Calu3 (cell line): ENCODE measurements at regions of chr1 and their contacts with region 1.

Region 1: GRCh38 chr1:245380790-245381535 is 226.2 kb downstream of the KIF26B start:
- DNase-seq: no peak
- H3K4me3 Mint-ChIP-seq: no peak overlapping the region
- H3K27ac Mint-ChIP-seq: no peak overlapping the region
- H3K4me1 Mint-ChIP-seq: no peaks in the 10 kb centered on the region
- H3K27me3 Mint-ChIP-seq: peaks cover 7% of the 10 kb centered on the region
- CTCF ChIP-seq: no peak

Region 2: GRCh38 chr1:245079021-245079609 is 301.8 kb before region 1 on chr1:
- CTCF ChIA-PET with region 1: no interaction called
- intact Hi-C with region 1: loop called (anchors 5 kb)
- DNase-seq: peak; percentile 28
- H3K4me3 Mint-ChIP-seq: no peak overlapping the region
- H3K27ac Mint-ChIP-seq: no peak overlapping the region
- H3K4me1 Mint-ChIP-seq: no peaks in the 10 kb centered on the region
- H3K27me3 Mint-ChIP-seq: no peaks in the 10 kb centered on the region
- CTCF ChIP-seq: peak; percentile 65

Region 3: DNA sequence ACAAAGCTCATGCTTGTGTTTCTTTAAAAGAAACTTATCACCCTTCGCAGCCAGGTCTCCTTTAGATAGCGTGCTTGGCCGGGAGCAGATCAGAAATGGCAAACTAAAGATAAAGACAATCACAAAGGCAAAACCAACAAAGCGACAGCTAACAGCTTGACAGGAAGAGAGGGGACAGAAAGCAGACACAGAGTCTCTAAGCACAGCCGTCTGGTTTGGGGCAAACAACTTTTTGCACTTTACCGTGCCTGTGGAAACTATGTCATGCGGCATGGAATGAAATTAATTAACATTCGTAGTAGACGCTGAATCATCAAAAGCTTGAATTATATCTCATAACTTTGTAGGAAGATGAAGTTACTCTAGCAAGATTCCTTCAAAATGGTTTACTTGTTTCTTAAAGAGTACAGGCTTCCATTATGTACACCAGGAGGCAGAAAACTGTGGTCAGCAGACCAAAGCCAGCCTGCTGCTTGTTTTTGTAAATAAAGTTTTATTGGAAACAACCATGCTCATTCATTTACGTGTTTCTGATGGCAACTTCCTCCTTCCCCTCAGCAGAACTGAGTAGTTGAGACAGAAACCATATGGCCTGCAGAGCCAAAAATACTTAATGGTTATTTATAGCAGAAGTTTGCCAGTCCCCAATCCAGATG is 43.0 kb before region 1 on chr1:
- CTCF ChIA-PET with region 1: interaction called, 10 read pairs
- intact Hi-C with region 1: no loop called
- DNase-seq: no peak
- H3K4me3 Mint-ChIP-seq: no peak overlapping the region
- H3K27ac Mint-ChIP-seq: no peak overlapping the region
- H3K4me1 Mint-ChIP-seq: peaks cover 12% of the 10 kb centered on the region
- H3K27me3 Mint-ChIP-seq: peaks cover 24% of the 10 kb centered on the region
- CTCF ChIP-seq: no peak

Region 4: DNA sequence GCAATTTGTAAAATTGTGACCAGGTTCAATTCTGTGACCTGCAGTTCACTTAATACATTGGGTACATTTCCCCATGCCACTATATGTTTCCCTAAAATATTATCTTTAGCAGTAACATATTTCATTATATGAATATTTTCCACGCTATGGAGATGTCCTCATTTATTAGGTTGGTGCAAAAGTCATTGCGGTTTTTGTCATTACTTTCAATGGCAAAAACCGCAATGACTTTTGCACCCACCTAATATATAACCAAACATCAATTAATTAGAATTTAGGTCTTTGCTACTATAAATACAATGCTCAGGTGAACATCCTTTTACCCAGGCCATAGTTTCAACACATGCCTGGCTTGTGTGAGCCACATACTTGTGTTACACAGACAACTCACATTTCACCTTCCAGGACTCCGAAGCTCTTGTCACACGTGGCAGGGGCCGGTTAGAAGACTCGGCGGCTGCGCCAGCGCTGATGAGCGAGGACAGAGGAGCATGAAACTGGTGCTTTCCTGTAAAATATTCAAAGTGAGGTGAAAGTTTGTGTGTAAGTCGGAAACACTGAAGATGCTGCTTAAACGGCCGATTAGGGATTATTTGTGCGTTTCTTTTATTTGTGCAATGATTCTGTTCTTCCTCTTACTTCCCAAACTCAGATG is 10.7 kb before region 1 on chr1:
- CTCF ChIA-PET with region 1: no interaction called
- intact Hi-C with region 1: no loop called
- DNase-seq: no peak
- H3K4me3 Mint-ChIP-seq: no peak overlapping the region
- H3K27ac Mint-ChIP-seq: no peak overlapping the region
- H3K4me1 Mint-ChIP-seq: no peaks in the 10 kb centered on the region
- H3K27me3 Mint-ChIP-seq: no peaks in the 10 kb centered on the region
- CTCF ChIP-seq: no peak